ENCODE measurements at regions of chr2 and their contacts with region 1.

Region 1: GRCh38 chr2:230924470-230925341 is at the start of gene GPR55:
- DNase-seq: peak; percentile 25
- H3K4me3 ChIP-seq: no peak within 1 kb of the TSS
- H3K27ac ChIP-seq: no peak within 1 kb of the TSS
- H3K4me1 ChIP-seq: no peaks in the 10 kb centered on the region
- CTCF ChIP-seq: peak; percentile 52
- total RNA-seq, gene GPR55: 0.22 TPM in 1 of 2 replicates, not detected in the other

Region 2: GRCh38 chr2:230053753-230054478 is 870.8 kb before region 1 on chr2:
- CTCF ChIA-PET with region 1: no interaction called
- POLR2A ChIA-PET with region 1: no interaction called
- intact Hi-C with region 1: no loop called
- DNase-seq: no peak
- H3K4me3 ChIP-seq: no peak overlapping the region
- H3K27ac ChIP-seq: no peak overlapping the region
- H3K4me1 ChIP-seq: no peaks in the 10 kb centered on the region
- CTCF ChIP-seq: no peak

Region 3: GRCh38 chr2:230847883-230848388 is 76.8 kb before region 1 on chr2:
- CTCF ChIA-PET with region 1: no interaction called
- POLR2A ChIA-PET with region 1: no interaction called
- intact Hi-C with region 1: loop called (anchors 5 kb)
- DNase-seq: peak; percentile 64
- H3K4me3 ChIP-seq: no peak overlapping the region
- H3K27ac ChIP-seq: no peak overlapping the region
- H3K4me1 ChIP-seq: no peaks in the 10 kb centered on the region
- CTCF ChIP-seq: peak; percentile 82

Region 4: GRCh38 chr2:231490801-231491200 is 566.1 kb after region 1 on chr2:
- CTCF ChIA-PET with region 1: no interaction called
- POLR2A ChIA-PET with region 1: no interaction called
- intact Hi-C with region 1: no loop called
- DNase-seq: no peak
- H3K4me3 ChIP-seq: no peak overlapping the region
- H3K27ac ChIP-seq: no peak overlapping the region
- H3K4me1 ChIP-seq: no peaks in the 10 kb centered on the region
- CTCF ChIP-seq: no peak

Measured in OCI-LY7 (cell line).